ENCODE measurements at regions of chr1 and their contacts with region 1.

Region 1: GRCh38 chr1:21160263-21160662 is 16.4 kb downstream of the EIF4G3 start:
- DNase-seq: no peak
- ATAC-seq: no peak
- H3K4me3 ChIP-seq: no peak overlapping the region
- H3K27ac ChIP-seq: no peak overlapping the region
- H3K4me1 ChIP-seq: peaks cover 7% of the 10 kb centered on the region
- H3K27me3 ChIP-seq: no peaks in the 10 kb centered on the region
- CTCF ChIP-seq: no peak
- POLR2A ChIP-seq: no peak
- RAD21 ChIP-seq: no peak

Region 2: DNA sequence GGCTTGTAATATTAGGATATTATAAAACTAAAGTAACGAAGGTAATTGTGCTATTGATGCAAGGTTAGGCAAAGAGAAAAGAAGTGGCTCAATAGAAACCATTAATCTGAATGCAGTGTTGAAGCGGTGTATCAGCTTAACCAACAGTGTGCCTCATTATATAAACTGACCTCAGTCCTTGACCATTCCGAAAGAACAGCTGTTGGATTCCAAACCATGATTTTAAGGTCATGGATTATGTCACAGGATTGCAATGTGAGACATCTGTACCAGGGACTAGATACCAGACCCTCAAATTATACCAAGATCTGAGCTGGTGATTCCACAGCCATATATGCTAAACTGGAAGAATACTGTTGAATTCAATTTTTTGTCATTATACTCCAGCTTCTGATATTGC is 239.0 kb before region 1 on chr1:
- CTCF ChIA-PET with region 1: no interaction called
- POLR2A ChIA-PET with region 1: no interaction called
- dilution Hi-C with region 1: no loop called
- in situ Hi-C with region 1: no loop called
- intact Hi-C with region 1: no loop called
- DNase-seq: peak; percentile 28
- ATAC-seq: peak; percentile 56
- H3K4me3 ChIP-seq: no peak overlapping the region
- H3K27ac ChIP-seq: no peak overlapping the region
- H3K4me1 ChIP-seq: no peaks in the 10 kb centered on the region
- H3K27me3 ChIP-seq: no peaks in the 10 kb centered on the region
- CTCF ChIP-seq: no peak
- POLR2A ChIP-seq: no peak
- RAD21 ChIP-seq: no peak

Region 3: DNA sequence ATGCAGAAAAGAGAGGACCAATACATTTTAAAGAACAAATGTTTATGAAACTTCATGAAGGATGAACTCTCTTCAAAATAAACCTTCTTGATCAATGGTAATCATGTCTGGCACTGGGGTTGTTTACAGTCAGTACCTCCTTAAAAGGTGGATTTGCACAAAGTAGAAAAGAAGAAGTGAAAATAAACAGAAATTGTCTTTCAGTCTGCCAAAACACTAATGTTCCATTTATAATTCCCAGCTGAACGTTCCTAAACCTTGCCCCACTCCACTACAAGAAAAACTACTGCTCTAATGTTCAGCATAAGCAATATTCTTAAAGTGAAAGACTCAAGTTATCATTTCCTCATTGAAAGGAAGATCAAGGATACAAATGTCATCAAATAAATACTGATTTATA is 69.8 kb before region 1 on chr1:
- CTCF ChIA-PET with region 1: no interaction called
- POLR2A ChIA-PET with region 1: no interaction called
- dilution Hi-C with region 1: no loop called
- in situ Hi-C with region 1: no loop called
- intact Hi-C with region 1: no loop called
- DNase-seq: no peak
- ATAC-seq: peak; percentile 33; the same call in 1 of the 2 replicates
- H3K4me3 ChIP-seq: no peak overlapping the region
- H3K27ac ChIP-seq: no peak overlapping the region
- H3K4me1 ChIP-seq: peaks cover 6% of the 10 kb centered on the region
- H3K27me3 ChIP-seq: no peaks in the 10 kb centered on the region
- CTCF ChIP-seq: no peak
- POLR2A ChIP-seq: no peak
- RAD21 ChIP-seq: no peak

Region 4: GRCh38 chr1:21115098-21115760 is 45.0 kb before region 1 on chr1:
- CTCF ChIA-PET with region 1: interaction called, 10 read pairs
- POLR2A ChIA-PET with region 1: no interaction called
- dilution Hi-C with region 1: no loop called
- in situ Hi-C with region 1: no loop called
- intact Hi-C with region 1: no loop called
- DNase-seq: no peak
- ATAC-seq: no peak
- H3K4me3 ChIP-seq: no peak overlapping the region
- H3K27ac ChIP-seq: no peak overlapping the region
- H3K4me1 ChIP-seq: no peaks in the 10 kb centered on the region
- H3K27me3 ChIP-seq: no peaks in the 10 kb centered on the region
- CTCF ChIP-seq: no peak
- POLR2A ChIP-seq: no peak
- RAD21 ChIP-seq: no peak